Activated T-helper 1 cell treated with anti-CD3 and anti-CD28 coated beads, Interleukin-12 subunit alpha, Interleukin-12 subunit beta, Interleukin-2, Interleukin-4 antibody, amounts not matched to agents 30 ng/mL and 10 ng/mL and 1 ng/mL, durations not matched to agents 14 hours and 24 hours and 36 hours (primary cell): ENCODE measurements at regions of chr21 and their contacts with region 1.

Region 1: DNA sequence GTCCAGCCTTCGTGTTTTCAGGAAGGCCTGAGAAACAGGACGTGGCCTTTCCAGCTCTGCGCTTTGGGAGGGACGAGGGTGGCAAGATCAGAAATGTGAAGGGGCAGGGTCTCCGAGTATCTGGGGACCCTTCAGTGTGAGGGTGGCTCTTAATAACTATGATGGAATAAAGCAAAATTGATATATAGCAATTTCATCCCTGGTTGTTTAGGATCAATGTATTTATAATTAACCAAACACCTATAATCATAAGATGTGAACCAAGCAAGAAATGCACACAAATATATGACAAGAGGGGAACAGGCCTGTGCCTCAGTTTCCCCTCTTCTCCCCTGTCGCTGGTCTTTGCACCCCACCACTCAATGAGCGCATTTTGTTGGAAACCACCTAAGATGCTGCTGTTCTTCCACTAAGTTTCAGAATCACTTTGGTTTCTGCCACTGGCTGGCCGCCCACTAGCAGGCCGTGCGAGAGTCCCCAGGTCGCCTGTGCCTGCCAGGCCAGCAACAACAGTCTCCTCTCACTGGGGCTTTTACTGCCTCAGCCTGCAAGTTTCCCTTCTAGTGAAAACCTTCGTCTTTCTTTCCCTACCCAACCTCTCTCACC is 36.6 kb downstream of the UBASH3A start:
- DNase-seq: no peak
- H3K4me3 Mint-ChIP-seq: peak overlapping the region; percentile 45
- H3K27ac Mint-ChIP-seq: peak overlapping the region; percentile 82
- H3K4me1 Mint-ChIP-seq: peaks cover 54% of the 10 kb centered on the region
- H3K27me3 Mint-ChIP-seq: no peaks in the 10 kb centered on the region

Region 2: GRCh38 chr21:42309753-42310221 is 130.5 kb before region 1 on chr21:
- intact Hi-C with region 1: no loop called
- DNase-seq: peak; percentile 61
- H3K4me3 Mint-ChIP-seq: no peak overlapping the region
- H3K27ac Mint-ChIP-seq: no peak overlapping the region
- H3K4me1 Mint-ChIP-seq: peaks cover 6% of the 10 kb centered on the region
- H3K27me3 Mint-ChIP-seq: peaks cover 18% of the 10 kb centered on the region

Region 3: DNA sequence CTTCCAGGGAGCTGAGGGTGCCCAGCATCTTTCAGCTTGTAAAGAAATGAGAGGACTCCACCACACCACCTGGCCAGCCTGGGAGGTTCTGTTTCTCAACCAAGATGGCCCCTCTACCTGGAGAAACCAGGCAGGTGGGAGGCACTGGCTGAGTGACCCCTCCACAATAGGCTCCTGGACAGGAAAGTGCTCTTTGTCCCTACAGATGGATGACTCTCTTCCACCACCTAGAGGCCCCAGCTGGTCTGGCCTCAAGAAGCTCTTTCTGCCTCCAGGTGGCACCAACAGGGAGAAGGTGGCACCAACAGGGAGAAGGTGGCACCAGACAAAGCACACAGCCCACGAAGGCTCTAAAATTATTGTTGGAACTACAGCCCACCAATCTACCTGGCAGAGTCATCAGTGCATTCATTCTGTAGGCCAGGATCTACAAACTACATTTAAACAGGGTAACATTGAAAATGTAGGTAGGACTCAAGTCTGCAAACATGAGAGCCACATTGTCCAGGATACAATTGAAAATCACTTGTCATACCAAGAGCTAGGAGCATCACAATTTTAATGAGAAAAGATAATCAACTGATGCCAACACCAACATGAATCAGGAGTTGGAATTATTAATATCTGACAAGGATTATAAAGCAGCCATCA is 58.8 kb before region 1 on chr21:
- intact Hi-C with region 1: no loop called
- DNase-seq: no peak
- H3K4me3 Mint-ChIP-seq: no peak overlapping the region
- H3K27ac Mint-ChIP-seq: peak overlapping the region; percentile 23
- H3K4me1 Mint-ChIP-seq: peaks cover 13% of the 10 kb centered on the region
- H3K27me3 Mint-ChIP-seq: no peaks in the 10 kb centered on the region

Region 4: GRCh38 chr21:42392721-42393442 is 47.4 kb before region 1 on chr21:
- intact Hi-C with region 1: loop called (anchors 2 kb)
- DNase-seq: no peak
- H3K4me3 Mint-ChIP-seq: peak overlapping the region; percentile 65
- H3K27ac Mint-ChIP-seq: peak overlapping the region; percentile 82
- H3K4me1 Mint-ChIP-seq: peaks cover 72% of the 10 kb centered on the region
- H3K27me3 Mint-ChIP-seq: no peaks in the 10 kb centered on the region

Region 5: DNA sequence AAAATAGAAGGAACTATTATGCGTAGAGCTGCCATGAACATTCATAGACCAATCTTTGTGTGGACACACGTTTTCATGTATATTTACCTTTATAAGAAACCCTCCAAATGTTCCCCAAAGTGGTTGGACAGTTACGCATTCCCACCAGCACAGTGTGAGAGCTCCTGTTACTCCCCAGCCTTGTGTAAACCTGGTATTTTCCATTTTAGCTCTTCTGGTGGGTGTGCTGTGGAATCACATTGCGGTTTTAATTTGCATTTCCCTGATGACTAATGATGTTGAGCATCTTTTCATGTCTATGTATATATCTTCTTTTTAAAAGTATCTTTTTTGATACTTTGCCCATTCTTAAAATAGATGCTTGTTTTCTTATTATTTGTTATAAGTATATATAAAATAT is 39.8 kb before region 1 on chr21:
- intact Hi-C with region 1: loop called (anchors 1 kb)
- DNase-seq: no peak
- H3K4me3 Mint-ChIP-seq: peak overlapping the region; percentile 58
- H3K27ac Mint-ChIP-seq: peak overlapping the region; percentile 88
- H3K4me1 Mint-ChIP-seq: peaks cover 65% of the 10 kb centered on the region
- H3K27me3 Mint-ChIP-seq: no peaks in the 10 kb centered on the region

Region 6: DNA sequence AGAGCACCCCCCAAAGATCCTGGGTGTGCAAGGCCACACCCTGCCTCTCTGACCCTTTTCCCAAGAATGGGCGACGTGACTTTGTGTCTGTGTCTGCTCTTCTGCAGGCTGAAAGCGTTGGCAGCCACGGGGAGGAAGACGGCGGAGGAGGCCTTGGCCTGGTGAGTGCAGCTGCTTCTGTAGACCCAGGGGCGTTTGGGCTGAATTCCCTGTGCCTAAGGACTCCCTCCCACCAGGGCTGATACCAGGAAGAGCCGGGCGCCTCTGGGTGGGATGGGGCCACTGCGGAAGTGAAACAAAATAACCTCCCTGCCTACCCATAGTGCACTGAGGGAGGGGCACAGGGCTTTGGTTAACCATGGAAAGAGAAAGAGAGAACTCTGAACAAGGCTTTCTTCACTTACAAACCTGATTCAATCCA is 34.1 kb before region 1 on chr21:
- intact Hi-C with region 1: loop called (anchors 1 kb)
- DNase-seq: peak; percentile 59
- H3K4me3 Mint-ChIP-seq: peak overlapping the region; percentile 92
- H3K27ac Mint-ChIP-seq: peak overlapping the region; percentile 94
- H3K4me1 Mint-ChIP-seq: peaks cover 58% of the 10 kb centered on the region
- H3K27me3 Mint-ChIP-seq: no peaks in the 10 kb centered on the region

Region 7: GRCh38 chr21:42414928-42415769 is 25.1 kb before region 1 on chr21:
- intact Hi-C with region 1: loop called (anchors 1 kb)
- DNase-seq: peak; percentile 88
- H3K4me3 Mint-ChIP-seq: peak overlapping the region; percentile 73
- H3K27ac Mint-ChIP-seq: peak overlapping the region; percentile 98
- H3K4me1 Mint-ChIP-seq: peaks cover 66% of the 10 kb centered on the region
- H3K27me3 Mint-ChIP-seq: no peaks in the 10 kb centered on the region

Region 8: GRCh38 chr21:42424914-42425541 is 15.3 kb before region 1 on chr21:
- intact Hi-C with region 1: loop called (anchors 1 kb)
- DNase-seq: peak; percentile 74
- H3K4me3 Mint-ChIP-seq: peak overlapping the region; percentile 76
- H3K27ac Mint-ChIP-seq: peak overlapping the region; percentile 95
- H3K4me1 Mint-ChIP-seq: peaks cover 67% of the 10 kb centered on the region
- H3K27me3 Mint-ChIP-seq: no peaks in the 10 kb centered on the region

Region 9: GRCh38 chr21:42456457-42456856 is 16.2 kb after region 1 on chr21:
- intact Hi-C with region 1: no loop called
- DNase-seq: peak; percentile 33
- H3K4me3 Mint-ChIP-seq: no peak overlapping the region
- H3K27ac Mint-ChIP-seq: peak overlapping the region; percentile 59
- H3K4me1 Mint-ChIP-seq: peaks cover 52% of the 10 kb centered on the region
- H3K27me3 Mint-ChIP-seq: no peaks in the 10 kb centered on the region

Region 10: GRCh38 chr21:42496122-42496900 is 56.0 kb after region 1 on chr21 and contains the start of gene RSPH1:
- intact Hi-C with region 1: no loop called
- DNase-seq: peak; percentile 99
- H3K4me3 Mint-ChIP-seq: peak within 1 kb of the TSS; percentile 92
- H3K27ac Mint-ChIP-seq: peak within 1 kb of the TSS; percentile 83
- H3K4me1 Mint-ChIP-seq: peaks cover 25% of the 10 kb centered on the region
- H3K27me3 Mint-ChIP-seq: peaks cover 6% of the 10 kb centered on the region
- total RNA-seq, gene RSPH1: not detected in 2 replicates